ENCODE measurements at regions of chr3 and their contacts with region 1.

Region 1: DNA sequence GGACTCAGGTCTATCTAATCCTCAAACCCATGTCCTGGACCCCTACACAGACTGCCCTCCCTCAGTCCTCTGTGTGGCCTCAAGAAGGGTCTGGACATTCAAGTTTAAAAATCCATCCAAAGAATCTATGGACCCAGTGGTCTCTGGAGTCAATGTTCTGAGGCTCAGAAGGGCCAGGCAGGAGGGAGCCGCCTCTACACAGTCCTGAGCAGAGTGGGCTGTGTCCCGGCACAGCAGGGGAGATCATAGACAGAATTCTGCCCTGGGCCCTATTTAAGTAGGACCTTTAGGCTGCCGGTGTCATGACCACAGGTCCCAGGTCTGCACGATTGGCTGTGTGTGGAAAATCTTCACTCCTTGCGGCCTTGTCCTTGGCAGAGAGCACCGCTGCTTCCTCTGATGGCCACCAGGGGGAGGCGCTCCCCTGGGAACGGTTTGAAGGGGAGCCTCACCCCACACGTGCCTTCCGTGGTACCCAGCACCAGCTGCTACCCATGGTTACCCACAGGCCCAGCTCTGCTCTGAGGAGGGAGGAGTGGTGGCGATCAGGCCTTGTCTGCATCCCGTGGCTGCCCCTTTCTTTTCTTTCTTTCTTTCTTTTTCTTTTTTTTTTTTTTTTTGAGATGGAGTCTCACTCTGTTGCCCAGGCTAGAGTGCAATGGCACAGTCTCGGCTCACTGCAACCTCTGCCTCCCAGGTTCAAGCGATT is 37.9 kb downstream of the CHRD start:
- DNase-seq: peak; percentile 52
- ATAC-seq: peak; percentile 97
- H3K4me3 ChIP-seq: no peak overlapping the region
- H3K27ac ChIP-seq: no peak overlapping the region
- H3K4me1 ChIP-seq: no peaks in the 10 kb centered on the region
- H3K27me3 ChIP-seq: no peaks in the 10 kb centered on the region
- CTCF ChIP-seq: peak; percentile 90 to 95 (median 94)
- POLR2A ChIP-seq: no peak
- RAD21 ChIP-seq: peak; percentile 97

Region 2: DNA sequence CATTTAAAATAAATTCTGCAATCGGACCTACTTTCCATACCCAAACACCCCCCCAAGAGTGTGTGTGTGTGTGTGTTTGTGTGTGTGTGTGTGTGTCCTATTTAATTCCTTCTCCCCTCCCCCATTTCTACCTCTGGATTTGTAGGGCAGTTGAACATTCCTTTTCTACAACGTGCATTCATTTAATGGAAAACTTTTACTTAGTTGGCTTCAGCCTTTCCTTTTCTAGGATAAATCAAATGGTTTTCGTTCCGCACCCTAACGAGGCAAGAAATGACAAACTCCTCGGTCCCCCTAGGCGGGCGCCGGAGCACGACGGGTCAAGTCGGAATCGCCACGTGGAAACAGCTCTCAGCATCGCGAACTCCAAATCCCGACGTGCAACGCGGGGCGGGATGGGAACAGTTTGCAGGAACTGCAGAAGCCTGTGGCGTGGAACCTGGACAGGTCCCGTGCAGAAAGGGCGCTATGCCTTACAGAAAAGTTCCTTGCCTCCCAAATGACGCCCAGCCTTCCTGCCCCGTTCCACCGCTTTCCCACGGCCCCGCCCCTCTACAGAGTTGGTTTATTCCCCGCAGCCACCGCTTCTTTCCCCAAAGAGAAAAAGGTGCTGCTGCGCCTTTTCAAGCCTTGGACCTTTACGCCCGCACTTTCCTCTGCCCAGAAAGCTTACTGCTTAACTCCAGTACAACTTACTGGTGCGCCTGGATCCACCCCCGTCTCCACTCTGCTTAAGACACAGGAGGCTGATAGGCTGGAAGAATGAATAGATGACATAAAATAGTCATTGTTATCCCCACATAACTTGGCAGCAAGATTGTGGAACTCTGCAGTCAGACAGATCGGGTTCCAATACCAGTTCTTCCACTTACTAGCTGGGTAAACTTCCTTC is 283.7 kb before region 1 on chr3:
- CTCF ChIA-PET with region 1: no interaction called
- POLR2A ChIA-PET with region 1: no interaction called
- RAD21 ChIA-PET with region 1: no interaction called
- intact Hi-C with region 1: no loop called
- DNase-seq: peak; percentile 85
- ATAC-seq: peak; percentile 78
- H3K4me3 ChIP-seq: peak overlapping the region; percentile 89 to 91
- H3K27ac ChIP-seq: peak overlapping the region; percentile 71
- H3K4me1 ChIP-seq: peaks cover 9 to 34% of the 10 kb centered on the region in 2 experiments; a peak in 3 of 4 replicates
- H3K27me3 ChIP-seq: no peaks in the 10 kb centered on the region
- CTCF ChIP-seq: no peak
- POLR2A ChIP-seq: peak; percentile 64
- RAD21 ChIP-seq: no peak

Region 3: GRCh38 chr3:184391266-184391665 is 26.5 kb before region 1 on chr3:
- CTCF ChIA-PET with region 1: no interaction called
- POLR2A ChIA-PET with region 1: no interaction called
- RAD21 ChIA-PET with region 1: no interaction called
- intact Hi-C with region 1: no loop called
- DNase-seq: no peak
- ATAC-seq: no peak
- H3K4me3 ChIP-seq: no peak overlapping the region
- H3K27ac ChIP-seq: no peak overlapping the region
- H3K4me1 ChIP-seq: no peaks in the 10 kb centered on the region
- H3K27me3 ChIP-seq: no peaks in the 10 kb centered on the region
- CTCF ChIP-seq: no peak
- POLR2A ChIP-seq: no peak
- RAD21 ChIP-seq: no peak

Region 4: GRCh38 chr3:184469423-184469822 is 51.6 kb after region 1 on chr3:
- CTCF ChIA-PET with region 1: interaction called, 7 read pairs
- POLR2A ChIA-PET with region 1: no interaction called
- RAD21 ChIA-PET with region 1: interaction called in 1 of 2 experiments, 5 read pairs
- intact Hi-C with region 1: loop called (anchors 2 kb)
- DNase-seq: peak; percentile 45
- ATAC-seq: peak; percentile 92
- H3K4me3 ChIP-seq: no peak overlapping the region
- H3K27ac ChIP-seq: no peak overlapping the region
- H3K4me1 ChIP-seq: peaks cover 2 to 12% of the 10 kb centered on the region in 2 experiments; a peak in 1 of 4 replicates
- H3K27me3 ChIP-seq: no peaks in the 10 kb centered on the region
- CTCF ChIP-seq: peak; percentile 89 to 93 (median 93)
- POLR2A ChIP-seq: no peak
- RAD21 ChIP-seq: peak; percentile 93

Region 5: GRCh38 chr3:184513276-184514170 is 95.8 kb after region 1 on chr3:
- CTCF ChIA-PET with region 1: interaction called, 7 read pairs
- POLR2A ChIA-PET with region 1: no interaction called
- RAD21 ChIA-PET with region 1: no interaction called
- intact Hi-C with region 1: loop called (anchors 1 kb)
- DNase-seq: peak; percentile 69
- ATAC-seq: peak; percentile 99
- H3K4me3 ChIP-seq: peak overlapping the region; percentile 32 to 49
- H3K27ac ChIP-seq: no peak overlapping the region
- H3K4me1 ChIP-seq: peaks cover 0 to 12% of the 10 kb centered on the region in 2 experiments; a peak in 1 of 4 replicates
- H3K27me3 ChIP-seq: no peaks in the 10 kb centered on the region
- CTCF ChIP-seq: peak; percentile 67 to 79 (median 79)
- POLR2A ChIP-seq: no peak
- RAD21 ChIP-seq: peak; percentile 80

Region 6: DNA sequence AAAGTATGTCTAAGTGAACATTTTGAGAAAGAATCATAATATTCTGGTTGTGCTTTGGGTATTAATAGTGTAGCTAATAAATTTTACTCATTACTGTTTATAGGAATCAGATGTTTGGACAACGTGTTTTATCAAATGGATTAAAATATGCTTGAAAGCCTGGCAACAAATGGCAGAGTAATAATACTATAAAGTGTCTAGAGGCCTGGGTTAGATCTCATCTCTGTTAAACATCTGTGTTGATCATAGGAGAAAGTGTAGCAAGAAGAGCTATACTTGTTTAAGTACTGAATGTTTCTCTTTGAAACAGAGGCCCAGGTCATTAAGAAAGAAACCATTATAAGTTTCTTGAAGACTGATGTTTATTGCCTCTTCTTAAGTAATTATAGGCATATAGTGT is 424.7 kb after region 1 on chr3:
- CTCF ChIA-PET with region 1: no interaction called
- POLR2A ChIA-PET with region 1: no interaction called
- RAD21 ChIA-PET with region 1: no interaction called
- intact Hi-C with region 1: no loop called
- DNase-seq: no peak
- ATAC-seq: no peak
- H3K4me3 ChIP-seq: no peak overlapping the region
- H3K27ac ChIP-seq: no peak overlapping the region
- H3K4me1 ChIP-seq: peaks cover 4 to 11% of the 10 kb centered on the region in 2 experiments; a peak in 3 of 4 replicates
- H3K27me3 ChIP-seq: no peaks in the 10 kb centered on the region
- CTCF ChIP-seq: no peak
- POLR2A ChIP-seq: no peak
- RAD21 ChIP-seq: no peak